Heart right ventricle (tissue), 16 donors: ENCODE measurements at regions of chr13 and their contacts with region 1.

Region 1: GRCh38 chr13:23999424-23999823 is 102.1 kb upstream of the C1QTNF9B start:
- DNase-seq: no peak
- ATAC-seq: no peak
- H3K4me3 ChIP-seq: no peak overlapping the region
- H3K27ac ChIP-seq: no peak overlapping the region
- H3K4me1 ChIP-seq: peaks cover 0 to 29% (median 9%) of the 10 kb centered on the region in 9 donors
- H3K27me3 ChIP-seq: no peaks in the 10 kb centered on the region
- CTCF ChIP-seq: no peak

Region 2: DNA sequence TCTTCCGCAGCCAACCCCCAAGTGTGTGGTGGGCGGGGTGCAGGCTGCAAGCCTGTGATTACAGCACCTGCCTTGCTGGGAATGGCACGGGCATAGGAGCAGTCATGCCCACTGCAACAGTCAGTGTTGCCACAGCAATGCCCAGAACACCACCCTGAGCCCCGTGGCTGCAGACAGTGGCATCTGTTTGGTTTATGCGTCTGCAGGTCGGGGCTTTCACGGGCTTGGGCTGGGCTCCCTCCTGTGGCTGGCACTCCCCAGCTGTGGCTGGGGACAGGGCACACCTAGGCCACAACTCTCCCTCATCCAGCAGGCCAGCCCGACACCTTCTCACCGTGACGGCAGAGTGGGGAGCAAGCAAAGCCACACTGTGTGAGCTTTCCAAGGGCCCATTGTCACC is 13.2 kb after region 1 on chr13:
- intact Hi-C with region 1: no loop called
- DNase-seq: no peak
- ATAC-seq: no peak
- H3K4me3 ChIP-seq: no peak overlapping the region
- H3K27ac ChIP-seq: no peak overlapping the region
- H3K4me1 ChIP-seq: peaks cover 0 to 13% (median 0%) of the 10 kb centered on the region in 9 donors
- H3K27me3 ChIP-seq: no peaks in the 10 kb centered on the region
- CTCF ChIP-seq: no peak

Region 3: GRCh38 chr13:24033527-24034302 is 34.3 kb after region 1 on chr13:
- intact Hi-C with region 1: loop called in 1 of 10 experiments (anchors 1 kb)
- DNase-seq: no peak
- ATAC-seq: peak in 6 of 8 donors; percentile 45 to 84 (median 68)
- H3K4me3 ChIP-seq: no peak overlapping the region
- H3K27ac ChIP-seq: peak overlapping the region in 6 of 10 donors; percentile 52 to 72 (median 67)
- H3K4me1 ChIP-seq: peaks cover 0 to 46% (median 27%) of the 10 kb centered on the region in 9 donors
- H3K27me3 ChIP-seq: no peaks in the 10 kb centered on the region
- CTCF ChIP-seq: no peak

Region 4: GRCh38 chr13:24341439-24341838 is 342.0 kb after region 1 on chr13:
- intact Hi-C with region 1: no loop called
- DNase-seq: no peak
- ATAC-seq: no peak
- H3K4me3 ChIP-seq: no peak overlapping the region
- H3K27ac ChIP-seq: no peak overlapping the region
- H3K4me1 ChIP-seq: no peaks in the 10 kb centered on the region
- H3K27me3 ChIP-seq: peaks cover 0 to 14% (median 0%) of the 10 kb centered on the region in 7 donors
- CTCF ChIP-seq: no peak